ENCODE measurements at regions of chr17 and their contacts with region 1.

Region 1: GRCh38 chr17:16415031-16415924 is at the start of gene TRPV2:
- DNase-seq: peak; percentile 60
- ATAC-seq: peak; percentile 67
- H3K4me3 ChIP-seq: peak within 1 kb of the TSS; percentile 95
- H3K27ac ChIP-seq: peak within 1 kb of the TSS; percentile 81
- H3K4me1 ChIP-seq: peaks cover 46% of the 10 kb centered on the region
- H3K27me3 ChIP-seq: no peaks in the 10 kb centered on the region
- CTCF ChIP-seq: peak; percentile 87 to 91 (median 87)
- EP300 ChIP-seq: no peak
- POLR2A ChIP-seq: peak; percentile 64
- RAD21 ChIP-seq: peak; percentile 94
- polyA plus RNA-seq, gene TRPV2: 8.9 to 29.2 TPM

Region 2: GRCh38 chr17:16158714-16159113 is 256.6 kb before region 1 on chr17:
- CTCF ChIA-PET with region 1: no interaction called
- POLR2A ChIA-PET with region 1: no interaction called
- RAD21 ChIA-PET with region 1: no interaction called
- SMC1A ChIA-PET with region 1: no interaction called
- in situ Hi-C with region 1: no loop called
- intact Hi-C with region 1: no loop called
- DNase-seq: no peak
- ATAC-seq: no peak
- H3K4me3 ChIP-seq: no peak overlapping the region
- H3K27ac ChIP-seq: no peak overlapping the region
- H3K4me1 ChIP-seq: no peaks in the 10 kb centered on the region
- H3K27me3 ChIP-seq: no peaks in the 10 kb centered on the region
- CTCF ChIP-seq: no peak
- EP300 ChIP-seq: no peak
- POLR2A ChIP-seq: no peak
- RAD21 ChIP-seq: no peak

Region 3: DNA sequence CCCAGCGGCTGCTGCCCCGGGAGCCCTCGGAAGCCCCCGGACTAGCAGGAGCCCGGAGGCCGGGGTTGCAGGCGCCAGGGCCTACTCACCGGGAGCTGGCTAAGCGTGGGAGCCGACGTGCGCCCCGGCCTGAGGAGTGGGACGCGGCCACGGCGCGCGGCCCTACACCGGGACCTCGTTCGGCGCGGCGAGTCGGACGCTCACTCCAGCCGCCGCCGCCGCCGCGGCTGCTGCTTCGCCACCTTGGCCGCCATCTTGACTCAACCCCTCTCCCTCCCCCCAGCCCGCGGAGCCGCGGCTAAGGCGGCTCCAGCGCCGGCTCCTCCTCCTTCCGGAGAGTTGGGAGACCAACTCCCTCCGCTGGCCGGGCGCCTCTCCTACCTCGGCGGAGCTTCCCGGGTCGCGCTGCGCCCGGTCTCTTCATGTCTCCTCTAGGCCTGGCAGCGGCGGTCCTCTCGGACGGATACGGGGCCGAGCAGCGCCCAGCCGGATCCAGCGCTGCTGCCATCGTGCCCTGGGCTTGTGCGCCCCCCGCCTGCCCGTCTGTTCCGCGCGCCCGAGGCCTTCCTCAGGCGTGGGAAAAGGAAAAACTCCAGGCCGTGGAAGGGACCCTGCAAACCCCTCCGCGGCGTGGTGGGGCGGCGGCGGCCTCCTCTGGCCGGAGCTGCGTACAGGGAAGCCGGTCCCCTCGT is 199.9 kb before region 1 on chr17 and contains the start of gene NCOR1:
- CTCF ChIA-PET with region 1: no interaction called
- POLR2A ChIA-PET with region 1: interaction called, 5 read pairs
- RAD21 ChIA-PET with region 1: interaction called, 3 read pairs
- SMC1A ChIA-PET with region 1: no interaction called
- in situ Hi-C with region 1: no loop called
- intact Hi-C with region 1: loop called (anchors 10 kb)
- DNase-seq: no peak
- ATAC-seq: peak; percentile 90
- H3K4me3 ChIP-seq: peak within 1 kb of the TSS; percentile 91
- H3K27ac ChIP-seq: peak within 1 kb of the TSS; percentile 96
- H3K4me1 ChIP-seq: peaks cover 4% of the 10 kb centered on the region
- H3K27me3 ChIP-seq: no peaks in the 10 kb centered on the region
- CTCF ChIP-seq: peak; percentile 13 to 38 (median 33); a peak in 3 of 6 replicates
- EP300 ChIP-seq: no peak
- POLR2A ChIP-seq: peak; percentile 97
- RAD21 ChIP-seq: peak; percentile 33
- polyA plus RNA-seq, gene NCOR1: 34.5 to 55.1 TPM

Region 4: DNA sequence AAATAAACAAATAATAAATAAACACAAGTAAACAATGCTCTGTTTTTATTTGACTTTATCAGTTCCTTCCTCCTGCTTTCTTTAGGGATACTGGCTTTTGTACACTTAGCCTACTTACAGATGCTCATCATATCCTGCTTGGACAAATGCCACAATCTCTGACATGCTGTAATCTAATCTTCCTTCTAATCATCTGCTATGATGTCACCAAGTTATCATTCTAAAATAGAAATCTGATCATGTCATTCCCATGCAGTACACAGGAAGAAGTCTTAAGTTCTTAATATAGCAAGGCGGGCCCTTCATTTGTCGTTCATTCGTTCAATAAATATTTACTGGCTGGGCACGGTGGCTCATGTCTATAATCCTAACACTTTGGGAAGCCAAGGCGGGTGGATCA is 43.5 kb before region 1 on chr17:
- CTCF ChIA-PET with region 1: interaction called, 127 read pairs
- POLR2A ChIA-PET with region 1: no interaction called
- RAD21 ChIA-PET with region 1: interaction called, 86 read pairs
- SMC1A ChIA-PET with region 1: interaction called, 61 read pairs
- in situ Hi-C with region 1: no loop called
- intact Hi-C with region 1: no loop called
- DNase-seq: no peak
- ATAC-seq: no peak
- H3K4me3 ChIP-seq: no peak overlapping the region
- H3K27ac ChIP-seq: no peak overlapping the region
- H3K4me1 ChIP-seq: no peaks in the 10 kb centered on the region
- H3K27me3 ChIP-seq: no peaks in the 10 kb centered on the region
- CTCF ChIP-seq: no peak
- EP300 ChIP-seq: no peak
- POLR2A ChIP-seq: no peak
- RAD21 ChIP-seq: no peak

Region 5: DNA sequence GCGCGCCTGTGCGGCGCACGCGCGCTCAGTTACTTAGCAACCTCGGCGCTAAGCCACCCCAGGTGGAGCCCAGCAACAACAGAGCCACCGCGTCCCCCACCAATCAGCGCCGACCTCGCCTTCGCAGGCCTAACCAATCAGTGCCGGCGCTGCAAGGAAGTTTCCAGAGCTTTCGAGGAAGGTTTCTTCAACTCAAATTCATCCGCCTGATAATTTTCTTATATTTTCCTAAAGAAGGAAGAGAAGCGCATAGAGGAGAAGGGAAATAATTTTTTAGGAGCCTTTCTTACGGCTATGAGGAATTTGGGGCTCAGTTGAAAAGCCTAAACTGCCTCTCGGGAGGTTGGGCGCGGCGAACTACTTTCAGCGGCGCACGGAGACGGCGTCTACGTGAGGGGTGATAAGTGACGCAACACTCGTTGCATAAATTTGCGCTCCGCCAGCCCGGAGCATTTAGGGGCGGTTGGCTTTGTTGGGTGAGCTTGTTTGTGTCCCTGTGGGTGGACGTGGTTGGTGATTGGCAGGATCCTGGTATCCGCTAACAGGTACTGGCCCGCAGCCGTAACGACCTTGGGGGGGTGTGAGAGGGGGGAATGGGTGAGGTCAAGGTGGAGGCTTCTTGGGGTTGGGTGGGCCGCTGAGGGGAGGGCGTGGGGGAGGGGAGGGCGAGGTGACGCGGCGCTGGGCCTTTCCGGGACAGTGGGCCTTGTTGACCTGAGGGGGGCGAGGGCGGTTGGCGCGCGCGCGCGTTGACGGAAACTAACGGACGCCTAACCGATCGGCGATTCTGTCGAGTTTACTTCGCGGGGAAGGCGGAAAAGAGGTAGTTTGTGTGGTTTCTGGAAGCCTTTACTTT is 34.4 kb before region 1 on chr17 and contains the start of gene UBB:
- CTCF ChIA-PET with region 1: interaction called, 53 read pairs
- POLR2A ChIA-PET with region 1: interaction called, 37 read pairs
- RAD21 ChIA-PET with region 1: interaction called, 18 read pairs
- SMC1A ChIA-PET with region 1: interaction called, 25 read pairs
- in situ Hi-C with region 1: loop called (anchors 5 kb)
- intact Hi-C with region 1: loop called (anchors 1 kb)
- DNase-seq: peak; percentile 89
- ATAC-seq: peak; percentile 97
- H3K4me3 ChIP-seq: peak within 1 kb of the TSS; percentile 76
- H3K27ac ChIP-seq: peak within 1 kb of the TSS; percentile 100
- H3K4me1 ChIP-seq: peaks cover 16% of the 10 kb centered on the region
- H3K27me3 ChIP-seq: no peaks in the 10 kb centered on the region
- CTCF ChIP-seq: peak in 2 of 3 experiments; percentile 20 to 24; a peak in 2 of 6 replicates
- EP300 ChIP-seq: no peak; a peak in 2 of 4 replicates
- POLR2A ChIP-seq: peak; percentile 100
- RAD21 ChIP-seq: no peak
- polyA plus RNA-seq, gene UBB: 4,008 to 4,246 TPM

Region 6: DNA sequence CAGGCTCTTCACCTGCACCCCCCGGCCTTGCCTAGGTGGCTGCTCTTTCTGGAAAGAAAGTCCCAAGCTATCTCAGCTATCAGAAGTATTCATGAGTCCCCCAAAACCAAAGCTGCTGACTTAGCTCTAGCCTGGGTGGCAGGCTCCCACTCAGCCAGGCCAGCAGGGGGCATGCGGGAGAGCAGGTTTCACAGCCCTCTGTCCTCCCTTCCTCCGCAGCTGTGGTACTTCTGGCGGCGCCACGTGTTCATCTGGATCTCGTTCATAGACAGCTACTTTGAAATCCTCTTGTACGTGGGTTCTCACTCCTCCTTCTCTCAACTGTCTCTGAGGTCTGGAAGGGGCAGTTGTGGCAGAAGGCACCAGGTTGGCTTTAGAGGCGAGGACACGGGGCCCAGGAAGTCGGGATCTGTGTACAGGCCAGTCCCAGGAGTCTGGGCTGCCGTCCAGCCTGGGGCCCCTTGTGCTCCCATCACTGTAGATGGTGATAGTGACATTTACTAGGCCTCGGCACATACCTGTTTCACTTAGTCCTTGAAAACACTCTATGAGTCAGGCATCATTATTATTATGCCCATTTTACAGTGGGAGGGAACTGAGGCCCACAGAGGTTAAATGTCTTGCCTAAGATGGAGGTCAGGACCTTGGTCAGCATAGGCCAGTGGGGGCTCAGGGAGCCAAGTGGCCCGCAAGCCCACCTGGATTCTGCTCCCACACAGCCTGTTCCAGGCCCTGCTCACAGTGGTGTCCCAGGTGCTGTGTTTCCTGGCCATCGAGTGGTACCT is 13.0 kb after region 1 on chr17:
- CTCF ChIA-PET with region 1: interaction called, 54 read pairs
- POLR2A ChIA-PET with region 1: interaction called, 4 read pairs
- RAD21 ChIA-PET with region 1: interaction called, 4 read pairs
- SMC1A ChIA-PET with region 1: interaction called, 11 read pairs
- in situ Hi-C with region 1: no loop called
- intact Hi-C with region 1: no loop called
- DNase-seq: no peak
- ATAC-seq: peak; percentile 93
- H3K4me3 ChIP-seq: no peak overlapping the region
- H3K27ac ChIP-seq: no peak overlapping the region
- H3K4me1 ChIP-seq: no peaks in the 10 kb centered on the region
- H3K27me3 ChIP-seq: no peaks in the 10 kb centered on the region
- CTCF ChIP-seq: peak; percentile 58 to 76 (median 75)
- EP300 ChIP-seq: no peak
- POLR2A ChIP-seq: no peak; the same call in 1 of the 2 replicates
- RAD21 ChIP-seq: peak; percentile 44

Region 7: GRCh38 chr17:16438557-16439302 is 23.5 kb after region 1 on chr17:
- CTCF ChIA-PET with region 1: interaction called, 26 read pairs
- POLR2A ChIA-PET with region 1: interaction called, 54 read pairs
- RAD21 ChIA-PET with region 1: interaction called, 82 read pairs
- SMC1A ChIA-PET with region 1: interaction called, 25 read pairs
- in situ Hi-C with region 1: no loop called
- intact Hi-C with region 1: loop called (anchors 2 kb)
- DNase-seq: peak; percentile 98
- ATAC-seq: peak; percentile 87
- H3K4me3 ChIP-seq: peak overlapping the region; percentile 97
- H3K27ac ChIP-seq: peak overlapping the region; percentile 79
- H3K4me1 ChIP-seq: peaks cover 15% of the 10 kb centered on the region
- H3K27me3 ChIP-seq: no peaks in the 10 kb centered on the region
- CTCF ChIP-seq: no peak
- EP300 ChIP-seq: peak in 1 of 2 experiments; percentile 28; a peak in 1 of 4 replicates
- POLR2A ChIP-seq: peak; percentile 96
- RAD21 ChIP-seq: no peak

Measured in GM12878 (cell line).